ENCODE measurements at regions of chr14 and their contacts with region 1.

Region 1: DNA sequence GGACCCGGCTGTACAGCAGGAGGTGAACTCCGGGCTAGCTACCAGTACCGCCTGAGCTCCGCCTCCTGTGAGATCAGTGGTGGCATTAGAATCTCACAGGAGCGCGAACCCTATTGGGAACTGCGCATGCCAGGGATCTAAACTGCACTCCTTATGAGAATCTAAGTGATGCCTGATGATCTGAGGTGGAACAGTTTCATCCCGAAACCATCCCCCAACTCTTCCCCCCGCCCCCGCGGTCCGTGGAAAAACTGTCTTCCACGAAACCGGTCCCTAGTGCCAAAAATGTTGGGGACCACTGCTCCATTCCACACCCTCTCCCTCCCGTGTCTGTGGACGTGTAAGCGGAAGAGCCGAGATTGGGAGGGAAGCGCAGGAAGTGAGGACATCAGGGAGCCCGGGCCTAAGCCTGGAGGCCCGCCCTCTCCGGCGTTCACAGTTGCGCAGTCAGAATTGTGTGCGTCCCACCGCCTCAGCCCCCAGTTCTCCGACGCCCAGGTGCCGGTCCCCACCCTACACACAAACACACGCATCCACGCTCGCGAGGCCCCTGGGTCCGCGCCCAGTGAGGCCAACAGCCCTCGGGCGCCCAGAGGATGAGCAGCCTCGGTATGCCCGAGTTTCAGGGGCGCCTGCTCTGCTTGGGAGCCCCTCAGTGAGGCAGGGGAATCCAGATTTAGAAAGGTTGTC is 1.8 kb upstream of the RNASE4 start:
- DNase-seq: peak; percentile 79 to 94 (median 92)
- H3K4me3 ChIP-seq: peak overlapping the region; percentile 53 to 99 (median 94)
- H3K27ac ChIP-seq: peak overlapping the region; percentile 98 to 100 (median 100)
- H3K27me3 ChIP-seq: no peaks in the 10 kb centered on the region
- CTCF ChIP-seq: peak in 27 of 56 donors; percentile 7 to 38 (median 17)

Region 2: GRCh38 chr14:20343092-20343861 is 339.3 kb before region 1 on chr14 and contains the start of gene PARP2:
- intact Hi-C with region 1: loop called (anchors 1 kb)
- DNase-seq: peak; percentile 95 to 98 (median 98)
- H3K4me3 ChIP-seq: peak within 1 kb of the TSS; percentile 57 to 98 (median 85)
- H3K27ac ChIP-seq: peak within 1 kb of the TSS; percentile 73 to 98 (median 93)
- H3K27me3 ChIP-seq: no peaks in the 10 kb centered on the region
- CTCF ChIP-seq: peak in 24 of 56 donors; percentile 11 to 49 (median 32)
- total RNA-seq, gene PARP2: 26.7 to 81.9 (median 48.4) TPM

Region 3: DNA sequence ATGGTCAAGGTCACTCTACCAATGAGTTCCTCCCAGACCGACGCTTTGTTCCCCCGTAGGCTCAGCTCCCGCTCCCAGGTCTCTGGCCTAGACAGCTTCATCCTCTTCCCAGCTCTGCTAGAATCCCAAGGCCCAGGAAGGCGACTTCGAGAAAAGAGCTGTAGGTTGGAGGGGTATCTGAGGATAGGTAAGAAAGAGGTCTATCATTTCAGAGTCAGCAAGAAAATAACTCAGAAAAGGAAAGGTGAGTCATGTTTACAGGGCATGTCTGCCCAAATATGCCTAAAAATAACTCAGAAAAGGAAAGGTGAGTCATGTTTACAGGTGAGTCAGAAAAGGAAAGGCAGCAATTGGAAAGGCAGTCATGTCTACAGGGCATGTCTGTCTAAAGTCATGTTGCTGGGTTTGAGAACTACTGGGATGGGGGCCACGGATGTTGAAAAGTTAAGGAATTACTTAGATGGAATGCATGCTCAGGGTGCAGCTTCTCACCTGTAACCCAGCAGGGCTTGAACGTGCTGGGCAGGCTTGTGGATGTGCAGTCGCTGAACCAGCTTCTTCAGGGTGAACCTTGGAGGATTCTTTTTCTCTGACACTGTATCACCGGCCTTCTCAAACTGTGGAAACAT is 281.5 kb before region 1 on chr14:
- intact Hi-C with region 1: no loop called
- DNase-seq: no peak
- H3K4me3 ChIP-seq: no peak overlapping the region
- H3K27ac ChIP-seq: no peak overlapping the region
- H3K27me3 ChIP-seq: no peaks in the 10 kb centered on the region
- CTCF ChIP-seq: no peak

Region 4: DNA sequence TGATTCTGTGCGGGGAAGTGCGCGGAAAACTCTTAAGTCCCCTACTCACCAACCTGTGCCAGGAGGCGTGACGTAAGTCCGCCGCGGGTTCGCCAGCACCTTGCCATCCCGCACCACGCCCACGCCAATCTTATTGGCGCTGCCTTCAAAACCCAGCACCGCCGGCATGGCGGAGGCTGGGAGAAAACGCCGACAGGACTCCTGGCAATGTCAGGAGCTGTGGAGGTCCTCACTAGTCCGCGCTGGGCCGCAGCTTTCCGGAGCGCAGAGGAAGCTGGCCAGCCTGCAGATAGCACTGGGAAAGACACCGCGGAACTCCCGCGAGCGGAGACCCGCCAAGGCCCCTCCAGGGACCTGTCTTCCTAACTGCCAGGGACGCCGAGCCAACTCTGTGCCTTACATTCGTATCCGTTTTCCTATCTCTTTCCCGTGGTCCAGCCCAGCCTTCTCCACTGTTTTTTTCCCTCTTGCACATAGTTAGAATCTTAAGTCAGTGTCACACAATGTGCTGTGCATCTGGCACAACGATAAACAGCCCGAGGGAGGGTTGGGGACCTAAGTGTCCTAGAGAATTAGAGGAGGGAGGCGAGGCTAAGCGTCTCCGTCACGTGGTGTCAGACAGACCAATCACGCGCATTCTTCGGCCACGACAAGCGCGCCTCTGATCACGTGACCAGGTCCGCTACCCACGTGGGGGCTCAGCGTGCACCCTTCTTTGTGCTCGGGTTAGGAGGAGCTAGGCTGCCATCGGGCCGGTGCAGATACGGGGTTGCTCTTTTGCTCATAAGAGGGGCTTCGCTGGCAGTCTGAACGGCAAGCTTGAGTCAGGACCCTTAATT is 227.8 kb before region 1 on chr14 and contains the starts of genes APEX1 and OSGEP:
- intact Hi-C with region 1: loop called in 1 of 2 experiments (anchors 5 kb)
- DNase-seq: peak; percentile 98 to 99 (median 99)
- H3K4me3 ChIP-seq: peak within 1 kb of the TSS; percentile 63 to 99 (median 88)
- H3K27ac ChIP-seq: peak within 1 kb of the TSS; percentile 53 to 99 (median 93)
- H3K27me3 ChIP-seq: no peaks in the 10 kb centered on the region
- CTCF ChIP-seq: peak in 14 of 56 donors; percentile 0 to 44 (median 16)
- total RNA-seq, gene APEX1: 36.8 to 106 (median 72.0) TPM
- total RNA-seq, gene OSGEP: 29.3 to 87.4 (median 51.0) TPM

Region 5: GRCh38 chr14:20530771-20531571 is 151.6 kb before region 1 on chr14:
- intact Hi-C with region 1: loop called in 1 of 2 experiments (anchors 5 kb)
- DNase-seq: peak in 9 of 10 donors; percentile 38 to 71 (median 44)
- H3K4me3 ChIP-seq: no peak overlapping the region
- H3K27ac ChIP-seq: no peak overlapping the region
- H3K27me3 ChIP-seq: peaks cover 0 to 20% (median 0%) of the 10 kb centered on the region in 45 donors
- CTCF ChIP-seq: peak; percentile 32 to 78 (median 62)

Region 6: DNA sequence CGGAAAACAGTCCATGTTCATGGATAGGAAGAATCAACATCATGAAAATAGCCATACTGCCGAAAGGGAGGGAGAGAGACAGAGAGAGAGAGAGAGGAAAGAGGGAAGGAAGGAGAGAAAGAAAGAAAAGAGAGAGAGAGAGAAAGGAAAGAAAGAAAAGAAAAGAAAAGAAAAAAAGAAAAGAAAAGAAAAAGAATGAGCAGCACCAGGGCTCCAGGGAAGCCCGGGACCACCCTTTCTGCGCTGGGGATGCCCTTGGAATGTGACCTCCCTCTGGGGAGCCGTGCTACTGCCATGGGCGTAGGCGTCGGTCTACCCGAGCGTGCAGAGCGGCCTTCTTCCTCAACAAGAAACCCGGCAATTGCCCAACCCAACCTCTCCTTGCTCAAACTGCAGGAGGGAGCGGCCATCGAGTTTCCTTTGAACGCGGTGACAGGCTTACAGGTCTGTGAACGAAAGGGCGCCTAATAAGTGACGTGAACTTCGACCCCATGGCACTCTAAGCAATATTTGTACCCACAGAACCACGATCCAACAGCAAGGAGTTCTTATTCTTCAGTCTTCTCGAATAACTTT is 58.0 kb before region 1 on chr14:
- intact Hi-C with region 1: loop called in 1 of 2 experiments (anchors 5 kb)
- DNase-seq: no peak
- H3K4me3 ChIP-seq: peak overlapping the region in 46 of 59 donors; percentile 2 to 59 (median 30)
- H3K27ac ChIP-seq: peak overlapping the region in 1 of 59 donors; percentile 32
- H3K27me3 ChIP-seq: peaks cover 0 to 67% (median 21%) of the 10 kb centered on the region in 45 donors
- CTCF ChIP-seq: no peak

Region 7: GRCh38 chr14:20723488-20723887 is 40.9 kb after region 1 on chr14:
- intact Hi-C with region 1: no loop called
- DNase-seq: no peak
- H3K4me3 ChIP-seq: peak overlapping the region in 56 of 59 donors; percentile 15 to 61 (median 41)
- H3K27ac ChIP-seq: no peak overlapping the region
- H3K27me3 ChIP-seq: peaks cover 0 to 30% (median 8%) of the 10 kb centered on the region in 45 donors
- CTCF ChIP-seq: no peak

Region 8: DNA sequence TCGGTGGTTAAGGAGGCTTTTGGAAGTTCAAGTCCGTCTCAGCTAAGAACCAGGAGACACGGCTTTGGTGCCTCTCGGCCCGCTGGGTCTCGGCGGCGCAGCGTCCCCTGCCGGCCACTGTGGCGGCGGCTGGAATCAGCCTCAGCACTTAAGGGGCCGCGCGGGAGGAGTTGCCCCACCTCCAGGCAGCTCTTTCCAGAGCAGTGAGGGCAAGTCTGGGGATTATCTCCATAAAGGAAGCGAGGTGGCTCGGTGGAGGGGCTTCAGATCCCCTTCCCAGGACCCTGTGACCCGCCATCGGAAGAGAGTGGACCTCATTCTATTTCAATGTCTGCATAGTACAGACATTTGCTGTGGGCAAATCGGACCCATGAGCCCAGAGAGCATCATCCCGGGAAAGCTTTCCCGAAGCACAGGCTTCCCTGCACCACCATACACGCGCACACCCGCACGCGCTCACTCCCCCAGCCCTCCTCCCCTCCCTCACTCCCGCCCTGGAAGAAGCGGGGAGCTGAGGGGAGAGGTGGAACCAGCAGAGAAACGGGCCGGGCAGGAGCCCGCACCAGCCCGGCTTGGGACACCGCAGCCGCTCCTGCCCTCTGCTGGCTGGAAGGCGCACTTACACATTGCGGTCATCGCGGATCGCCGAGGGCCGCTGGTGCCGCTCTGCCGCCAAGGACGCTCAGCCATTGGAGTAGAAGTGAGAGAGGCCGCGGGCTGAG is 288.6 kb after region 1 on chr14:
- intact Hi-C with region 1: loop called in 1 of 2 experiments (anchors 10 kb)
- DNase-seq: peak; percentile 66 to 89 (median 76)
- H3K4me3 ChIP-seq: peak overlapping the region; percentile 54 to 97 (median 70)
- H3K27ac ChIP-seq: peak overlapping the region in 55 of 59 donors; percentile 10 to 88 (median 68)
- H3K27me3 ChIP-seq: peaks cover 0 to 20% (median 0%) of the 10 kb centered on the region in 45 donors
- CTCF ChIP-seq: peak; percentile 52 to 88 (median 78)

Region 9: DNA sequence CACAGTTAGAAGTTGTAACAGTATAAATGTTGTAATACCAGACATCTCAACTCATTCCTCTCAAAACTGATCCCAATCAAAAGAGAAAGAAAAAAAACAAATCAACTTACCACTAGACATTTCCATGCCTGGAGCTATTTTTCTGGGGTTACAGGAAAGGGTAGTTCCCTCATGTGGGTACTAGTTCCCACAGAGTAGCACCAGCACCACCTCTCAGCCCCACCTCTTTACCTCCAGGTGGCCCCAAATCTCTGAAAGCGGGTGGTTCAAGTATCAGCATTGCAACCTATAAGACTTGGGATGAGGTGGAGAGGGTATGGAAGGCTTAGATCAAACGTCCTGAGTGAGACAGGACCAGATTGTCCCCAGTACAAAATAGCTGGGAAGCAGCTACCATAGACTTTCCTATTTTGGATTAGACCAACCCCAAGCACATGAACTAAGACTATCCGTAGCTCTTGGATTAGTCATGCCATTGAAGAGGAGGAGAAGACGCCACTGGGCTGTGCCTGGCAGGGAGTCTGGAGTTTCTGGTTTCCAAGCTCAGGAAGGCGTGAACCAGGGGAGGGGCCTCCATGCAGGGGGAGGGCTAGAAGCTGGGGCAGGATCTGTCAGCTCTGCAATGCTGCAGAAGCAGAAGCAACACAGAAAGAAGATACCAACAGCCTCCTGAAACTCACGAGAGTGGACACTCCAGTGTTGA is 316.2 kb after region 1 on chr14 and contains the start of gene SLC39A2:
- intact Hi-C with region 1: no loop called
- DNase-seq: no peak
- H3K4me3 ChIP-seq: no peak within 1 kb of the TSS
- H3K27ac ChIP-seq: no peak within 1 kb of the TSS
- H3K27me3 ChIP-seq: peaks cover 0 to 3% (median 0%) of the 10 kb centered on the region in 45 donors
- CTCF ChIP-seq: no peak
- total RNA-seq, gene SLC39A2: 0.37 to 1.5 (median 0.75) TPM in 27 of 120 experiments, not detected in the others